ENCODE measurements at regions of chr10 and their contacts with region 1.

Region 1: GRCh38 chr10:77391605-77392235 is 245.9 kb downstream of the KCNMA1 start:
- DNase-seq: no peak
- ATAC-seq: peak; percentile 84
- H3K4me3 ChIP-seq: no peak overlapping the region
- H3K27ac ChIP-seq: no peak overlapping the region
- H3K4me1 ChIP-seq: no peaks in the 10 kb centered on the region
- H3K27me3 ChIP-seq: no peaks in the 10 kb centered on the region; a peak in 1 of 4 replicates
- CTCF ChIP-seq: peak; percentile 51 to 73 (median 72)
- EP300 ChIP-seq: no peak
- POLR2A ChIP-seq: no peak
- RAD21 ChIP-seq: peak; percentile 87

Region 2: GRCh38 chr10:77165445-77166208 is 226.1 kb before region 1 on chr10:
- CTCF ChIA-PET with region 1: interaction called, 15 read pairs
- POLR2A ChIA-PET with region 1: no interaction called
- RAD21 ChIA-PET with region 1: interaction called, 4 read pairs
- SMC1A ChIA-PET with region 1: interaction called, 5 read pairs
- in situ Hi-C with region 1: no loop called
- intact Hi-C with region 1: no loop called
- DNase-seq: peak; percentile 24
- ATAC-seq: peak; percentile 95; the same call in 2 of the 3 replicates
- H3K4me3 ChIP-seq: no peak overlapping the region
- H3K27ac ChIP-seq: no peak overlapping the region
- H3K4me1 ChIP-seq: no peaks in the 10 kb centered on the region
- H3K27me3 ChIP-seq: no peaks in the 10 kb centered on the region
- CTCF ChIP-seq: peak; percentile 80 to 87 (median 81); a peak in 5 of 6 replicates
- EP300 ChIP-seq: no peak
- POLR2A ChIP-seq: no peak
- RAD21 ChIP-seq: peak; percentile 82

Region 3: GRCh38 chr10:77251297-77252013 is 140.3 kb before region 1 on chr10:
- CTCF ChIA-PET with region 1: interaction called, 7 read pairs
- POLR2A ChIA-PET with region 1: interaction called, 3 read pairs
- RAD21 ChIA-PET with region 1: interaction called, 7 read pairs
- SMC1A ChIA-PET with region 1: interaction called, 8 read pairs
- in situ Hi-C with region 1: no loop called
- intact Hi-C with region 1: loop called (anchors 5 kb)
- DNase-seq: no peak
- ATAC-seq: peak; percentile 94
- H3K4me3 ChIP-seq: no peak overlapping the region
- H3K27ac ChIP-seq: no peak overlapping the region
- H3K4me1 ChIP-seq: no peaks in the 10 kb centered on the region
- H3K27me3 ChIP-seq: no peaks in the 10 kb centered on the region
- CTCF ChIP-seq: peak; percentile 59 to 76 (median 64)
- EP300 ChIP-seq: no peak
- POLR2A ChIP-seq: no peak
- RAD21 ChIP-seq: peak; percentile 66

Region 4: GRCh38 chr10:77377678-77378352 is 13.9 kb before region 1 on chr10:
- CTCF ChIA-PET with region 1: interaction called, 15 read pairs
- POLR2A ChIA-PET with region 1: no interaction called
- RAD21 ChIA-PET with region 1: no interaction called
- SMC1A ChIA-PET with region 1: interaction called, 6 read pairs
- in situ Hi-C with region 1: no loop called
- intact Hi-C with region 1: no loop called
- DNase-seq: no peak
- ATAC-seq: peak; percentile 55
- H3K4me3 ChIP-seq: no peak overlapping the region
- H3K27ac ChIP-seq: no peak overlapping the region
- H3K4me1 ChIP-seq: no peaks in the 10 kb centered on the region
- H3K27me3 ChIP-seq: no peaks in the 10 kb centered on the region
- CTCF ChIP-seq: peak in 1 of 3 experiments; percentile 29; a peak in 1 of 6 replicates
- EP300 ChIP-seq: no peak
- POLR2A ChIP-seq: no peak
- RAD21 ChIP-seq: peak; percentile 38; the same call in 1 of the 2 replicates

Region 5: GRCh38 chr10:77405771-77406241 is 14.1 kb after region 1 on chr10:
- CTCF ChIA-PET with region 1: interaction called, 18 read pairs
- POLR2A ChIA-PET with region 1: no interaction called
- RAD21 ChIA-PET with region 1: interaction called, 7 read pairs
- SMC1A ChIA-PET with region 1: interaction called, 20 read pairs
- in situ Hi-C with region 1: no loop called
- intact Hi-C with region 1: no loop called
- DNase-seq: no peak
- ATAC-seq: peak; percentile 86
- H3K4me3 ChIP-seq: no peak overlapping the region
- H3K27ac ChIP-seq: no peak overlapping the region
- H3K4me1 ChIP-seq: no peaks in the 10 kb centered on the region; the same call in 1 of the 2 replicates
- H3K27me3 ChIP-seq: no peaks in the 10 kb centered on the region
- CTCF ChIP-seq: no peak
- EP300 ChIP-seq: no peak
- POLR2A ChIP-seq: no peak
- RAD21 ChIP-seq: no peak

Region 6: DNA sequence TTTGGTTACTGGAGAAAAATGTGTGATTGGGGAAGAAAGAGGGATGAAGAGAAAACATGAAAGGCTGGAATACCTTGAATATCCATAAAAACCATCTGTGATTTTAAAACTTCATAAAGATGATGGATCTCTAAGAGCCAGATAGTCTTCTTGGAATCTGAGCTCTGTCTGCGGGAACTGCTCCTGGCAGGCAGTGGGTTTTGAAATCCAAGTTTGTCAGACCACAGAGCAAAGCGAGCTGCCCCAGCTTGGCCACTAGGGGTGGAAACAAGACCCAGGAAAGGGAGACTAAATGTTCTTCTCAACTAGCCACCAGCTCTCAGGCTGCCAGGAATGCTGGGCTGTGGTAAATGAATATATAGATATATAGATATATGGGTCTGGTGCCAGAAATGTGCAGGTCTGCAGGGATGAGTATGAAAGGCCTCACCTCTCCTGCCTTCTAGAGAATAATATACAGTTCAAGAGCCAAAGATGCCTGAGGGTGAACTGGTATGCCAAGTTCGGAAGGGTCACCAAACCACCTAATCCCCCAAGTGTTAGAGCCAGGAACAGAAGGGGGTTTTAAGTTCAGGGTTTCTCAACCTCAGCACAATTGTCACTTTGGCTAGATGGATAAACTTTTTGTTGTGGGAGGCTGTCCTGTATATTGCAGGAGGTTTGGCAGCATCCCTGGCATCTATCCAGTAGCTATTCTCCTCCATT is 37.1 kb after region 1 on chr10:
- CTCF ChIA-PET with region 1: interaction called, 5 read pairs
- POLR2A ChIA-PET with region 1: interaction called, 4 read pairs
- RAD21 ChIA-PET with region 1: no interaction called
- SMC1A ChIA-PET with region 1: interaction called, 14 read pairs
- in situ Hi-C with region 1: no loop called
- intact Hi-C with region 1: no loop called
- DNase-seq: no peak
- ATAC-seq: peak; percentile 66
- H3K4me3 ChIP-seq: no peak overlapping the region
- H3K27ac ChIP-seq: no peak overlapping the region
- H3K4me1 ChIP-seq: no peaks in the 10 kb centered on the region
- H3K27me3 ChIP-seq: no peaks in the 10 kb centered on the region
- CTCF ChIP-seq: peak in 2 of 3 experiments; percentile 28 to 55; a peak in 4 of 6 replicates
- EP300 ChIP-seq: no peak
- POLR2A ChIP-seq: no peak
- RAD21 ChIP-seq: peak; percentile 26; the same call in 1 of the 2 replicates

Region 7: DNA sequence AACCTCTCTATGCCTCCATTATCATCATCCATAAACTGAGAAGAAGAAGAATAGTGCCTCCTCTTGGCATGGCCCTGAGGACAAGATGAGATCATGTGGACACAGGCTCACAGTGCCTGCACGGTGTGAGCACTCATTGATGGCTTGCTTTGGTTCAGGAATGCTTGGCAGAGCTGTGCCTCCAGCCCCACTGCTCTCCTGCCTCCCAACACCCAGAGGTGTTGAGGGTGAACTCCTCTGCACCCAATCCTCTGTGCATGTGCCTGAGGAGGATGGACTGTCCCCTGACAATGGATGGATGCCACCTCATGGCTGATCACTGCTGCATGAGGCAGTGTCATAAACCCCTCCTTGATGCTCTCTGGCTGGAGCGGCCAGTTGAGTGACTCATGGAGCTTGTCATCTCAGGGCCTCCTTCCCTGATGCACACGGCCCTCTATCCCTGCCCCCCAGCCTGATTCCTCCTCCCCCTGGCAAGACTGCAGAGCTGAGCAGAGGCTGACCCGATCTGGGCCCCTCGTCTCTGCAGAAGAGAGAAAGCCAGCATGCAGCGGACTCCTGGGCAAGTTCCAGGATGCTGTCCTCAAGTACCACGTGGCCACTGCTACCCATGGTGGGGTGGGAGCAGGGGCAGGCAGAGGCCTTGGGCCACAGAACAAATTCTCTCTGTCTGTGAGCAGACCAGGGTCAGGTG is 109.6 kb after region 1 on chr10:
- CTCF ChIA-PET with region 1: interaction called, 7 read pairs
- POLR2A ChIA-PET with region 1: no interaction called
- RAD21 ChIA-PET with region 1: interaction called, 14 read pairs
- SMC1A ChIA-PET with region 1: interaction called, 13 read pairs
- in situ Hi-C with region 1: no loop called
- intact Hi-C with region 1: no loop called
- DNase-seq: no peak
- ATAC-seq: peak; percentile 32
- H3K4me3 ChIP-seq: no peak overlapping the region
- H3K27ac ChIP-seq: no peak overlapping the region
- H3K4me1 ChIP-seq: peaks cover 11% of the 10 kb centered on the region
- H3K27me3 ChIP-seq: no peaks in the 10 kb centered on the region
- CTCF ChIP-seq: no peak
- EP300 ChIP-seq: no peak
- POLR2A ChIP-seq: no peak
- RAD21 ChIP-seq: no peak